CD4-positive, alpha-beta memory T cell (primary cell): ENCODE measurements at regions of chrX and their contacts with region 1.

Region 1: GRCh38 chrX:125132285-125132684 is 187.4 kb upstream of the TEX13C start:
- DNase-seq: peak in 2 of 5 donors; percentile 1 to 2
- H3K4me3 ChIP-seq: no peak overlapping the region
- H3K4me3 Mint-ChIP-seq: no peak overlapping the region
- H3K27ac ChIP-seq: no peak overlapping the region
- H3K27ac Mint-ChIP-seq: no peak overlapping the region
- H3K4me1 ChIP-seq: no peaks in the 10 kb centered on the region
- H3K4me1 Mint-ChIP-seq: no peaks in the 10 kb centered on the region
- H3K27me3 ChIP-seq: no peaks in the 10 kb centered on the region
- H3K27me3 Mint-ChIP-seq: no peaks in the 10 kb centered on the region

Region 2: GRCh38 chrX:123975180-123975579 is 1157.1 kb before region 1 on chrX:
- CTCF ChIA-PET with region 1: no interaction called
- POLR2A ChIA-PET with region 1: no interaction called
- intact Hi-C with region 1: no loop called
- DNase-seq: no peak
- H3K4me3 ChIP-seq: no peak overlapping the region
- H3K4me3 Mint-ChIP-seq: peak overlapping the region in 1 of 8 donors; percentile 15
- H3K27ac ChIP-seq: no peak overlapping the region
- H3K27ac Mint-ChIP-seq: peak overlapping the region in 1 of 7 donors; percentile 42
- H3K4me1 ChIP-seq: peaks cover 61% of the 10 kb centered on the region
- H3K4me1 Mint-ChIP-seq: peaks cover 28 to 63% (median 38%) of the 10 kb centered on the region in 4 donors
- H3K27me3 ChIP-seq: no peaks in the 10 kb centered on the region
- H3K27me3 Mint-ChIP-seq: no peaks in the 10 kb centered on the region

Region 3: GRCh38 chrX:124211312-124211942 is 920.9 kb before region 1 on chrX:
- CTCF ChIA-PET with region 1: no interaction called
- POLR2A ChIA-PET with region 1: no interaction called
- intact Hi-C with region 1: loop called (anchors 5 kb)
- DNase-seq: peak; percentile 47 to 59 (median 53)
- H3K4me3 ChIP-seq: no peak overlapping the region
- H3K4me3 Mint-ChIP-seq: peak overlapping the region in 1 of 8 donors; percentile 10
- H3K27ac ChIP-seq: no peak overlapping the region
- H3K27ac Mint-ChIP-seq: peak overlapping the region in 4 of 7 donors; percentile 2 to 40 (median 28)
- H3K4me1 ChIP-seq: peaks cover 48% of the 10 kb centered on the region
- H3K4me1 Mint-ChIP-seq: peaks cover 33 to 47% (median 40%) of the 10 kb centered on the region in 4 donors
- H3K27me3 ChIP-seq: no peaks in the 10 kb centered on the region
- H3K27me3 Mint-ChIP-seq: no peaks in the 10 kb centered on the region

Region 4: GRCh38 chrX:124406294-124407014 is 725.8 kb before region 1 on chrX:
- CTCF ChIA-PET with region 1: interaction called, 21 read pairs
- POLR2A ChIA-PET with region 1: no interaction called
- intact Hi-C with region 1: loop called (anchors 1 kb)
- DNase-seq: peak; percentile 49 to 52 (median 52)
- H3K4me3 ChIP-seq: no peak overlapping the region
- H3K4me3 Mint-ChIP-seq: no peak overlapping the region
- H3K27ac ChIP-seq: no peak overlapping the region
- H3K27ac Mint-ChIP-seq: no peak overlapping the region
- H3K4me1 ChIP-seq: no peaks in the 10 kb centered on the region
- H3K4me1 Mint-ChIP-seq: peaks cover 0 to 1% (median under 1%) of the 10 kb centered on the region in 4 donors
- H3K27me3 ChIP-seq: no peaks in the 10 kb centered on the region
- H3K27me3 Mint-ChIP-seq: no peaks in the 10 kb centered on the region

Region 5: GRCh38 chrX:124592744-124593143 is 539.5 kb before region 1 on chrX:
- CTCF ChIA-PET with region 1: no interaction called
- POLR2A ChIA-PET with region 1: no interaction called
- intact Hi-C with region 1: loop called (anchors 2 kb)
- DNase-seq: no peak
- H3K4me3 ChIP-seq: no peak overlapping the region
- H3K4me3 Mint-ChIP-seq: peak overlapping the region in 1 of 8 donors; percentile 24
- H3K27ac ChIP-seq: no peak overlapping the region
- H3K27ac Mint-ChIP-seq: no peak overlapping the region
- H3K4me1 ChIP-seq: no peaks in the 10 kb centered on the region
- H3K4me1 Mint-ChIP-seq: peaks cover 0 to 8% (median 2%) of the 10 kb centered on the region in 4 donors
- H3K27me3 ChIP-seq: no peaks in the 10 kb centered on the region
- H3K27me3 Mint-ChIP-seq: peaks cover 0 to 1% of the 10 kb centered on the region in 2 donors

Region 6: GRCh38 chrX:125306335-125306866 is 174.1 kb after region 1 on chrX:
- CTCF ChIA-PET with region 1: no interaction called
- POLR2A ChIA-PET with region 1: no interaction called
- intact Hi-C with region 1: no loop called
- DNase-seq: no peak
- H3K4me3 ChIP-seq: no peak overlapping the region
- H3K4me3 Mint-ChIP-seq: no peak overlapping the region
- H3K27ac ChIP-seq: no peak overlapping the region
- H3K27ac Mint-ChIP-seq: no peak overlapping the region
- H3K4me1 ChIP-seq: no peaks in the 10 kb centered on the region
- H3K4me1 Mint-ChIP-seq: no peaks in the 10 kb centered on the region
- H3K27me3 ChIP-seq: no peaks in the 10 kb centered on the region
- H3K27me3 Mint-ChIP-seq: peaks cover 0 to 2% of the 10 kb centered on the region in 2 donors